ENCODE measurements at regions of chr5 and their contacts with region 1.

Region 1: GRCh38 chr5:154405078-154405792 is 40.6 kb upstream of the SAP30L start:
- DNase-seq: peak; percentile 31 to 75 (median 61)
- ATAC-seq: peak; percentile 96
- H3K4me3 ChIP-seq: peak overlapping the region; percentile 33
- H3K4me3 Mint-ChIP-seq: peak overlapping the region; percentile 35 to 80 (median 65)
- H3K27ac ChIP-seq: no peak overlapping the region
- H3K27ac Mint-ChIP-seq: peak overlapping the region in 3 of 9 donors; percentile 18 to 73 (median 32)
- H3K4me1 ChIP-seq: peaks cover 4 to 8% of the 10 kb centered on the region in 2 donors
- H3K4me1 Mint-ChIP-seq: peaks cover 0 to 15% (median 10%) of the 10 kb centered on the region in 7 donors
- H3K27me3 ChIP-seq: no peaks in the 10 kb centered on the region
- H3K27me3 Mint-ChIP-seq: no peaks in the 10 kb centered on the region

Region 2: DNA sequence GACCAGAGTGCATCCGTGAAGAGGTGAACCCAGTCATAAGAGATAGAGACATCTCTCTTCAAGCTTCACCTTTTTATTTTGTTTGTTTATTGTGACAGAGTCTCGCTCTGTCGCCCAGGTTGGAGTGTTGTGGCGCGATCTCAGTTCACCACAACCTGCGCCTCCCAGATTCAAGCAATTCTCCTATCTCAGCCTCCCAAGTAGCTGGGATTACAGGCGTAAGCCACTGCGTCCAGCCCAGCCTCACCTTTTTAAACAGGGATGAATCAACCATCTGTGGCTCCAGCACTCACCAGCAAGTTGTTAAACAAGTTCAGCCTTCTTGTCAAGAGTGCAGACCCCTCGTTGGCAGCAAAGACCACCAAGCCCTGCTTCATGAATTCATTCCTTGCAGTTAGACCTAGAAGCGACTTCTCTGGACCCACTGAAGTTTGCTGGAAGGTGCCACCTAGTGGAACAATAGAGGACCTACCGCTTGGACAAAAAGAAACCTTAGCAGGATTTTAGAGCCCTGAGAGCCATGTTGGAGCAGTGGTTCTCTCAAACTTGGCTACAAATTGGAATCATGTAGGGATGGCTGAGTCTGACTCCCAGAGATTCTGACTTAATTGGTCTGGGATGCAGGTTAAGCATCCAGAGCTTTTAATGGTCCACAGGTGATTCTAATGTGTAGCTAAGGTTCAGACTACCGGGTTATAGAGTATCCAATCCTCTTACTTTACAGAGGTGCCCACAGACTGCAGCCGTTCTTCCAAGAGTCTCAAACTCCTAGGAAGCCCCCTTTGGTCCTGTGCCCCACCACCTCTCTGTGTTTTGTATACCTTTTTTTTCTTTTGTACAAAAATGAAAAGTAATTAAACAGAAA is 225.2 kb before region 1 on chr5:
- CTCF ChIA-PET with region 1: interaction called, 3 read pairs
- POLR2A ChIA-PET with region 1: no interaction called
- intact Hi-C with region 1: loop called (anchors 1 kb)
- DNase-seq: peak in 6 of 9 donors; percentile 28 to 61 (median 43)
- ATAC-seq: peak; percentile 92
- H3K4me3 ChIP-seq: no peak overlapping the region
- H3K4me3 Mint-ChIP-seq: no peak overlapping the region
- H3K27ac ChIP-seq: no peak overlapping the region
- H3K27ac Mint-ChIP-seq: no peak overlapping the region
- H3K4me1 ChIP-seq: peaks cover 0 to 5% of the 10 kb centered on the region in 2 donors
- H3K4me1 Mint-ChIP-seq: peaks cover 0 to 31% (median 0%) of the 10 kb centered on the region in 7 donors
- H3K27me3 ChIP-seq: no peaks in the 10 kb centered on the region
- H3K27me3 Mint-ChIP-seq: peaks cover 0 to 22% (median 11%) of the 10 kb centered on the region in 5 donors

Region 3: GRCh38 chr5:154238776-154239481 is 166.3 kb before region 1 on chr5:
- CTCF ChIA-PET with region 1: no interaction called
- POLR2A ChIA-PET with region 1: no interaction called
- intact Hi-C with region 1: no loop called
- DNase-seq: no peak
- ATAC-seq: peak; percentile 20
- H3K4me3 ChIP-seq: no peak overlapping the region
- H3K4me3 Mint-ChIP-seq: no peak overlapping the region
- H3K27ac ChIP-seq: no peak overlapping the region
- H3K27ac Mint-ChIP-seq: peak overlapping the region in 1 of 9 donors; percentile 28
- H3K4me1 ChIP-seq: no peaks in the 10 kb centered on the region
- H3K4me1 Mint-ChIP-seq: peaks cover 14 to 58% (median 33%) of the 10 kb centered on the region in 7 donors
- H3K27me3 ChIP-seq: no peaks in the 10 kb centered on the region
- H3K27me3 Mint-ChIP-seq: no peaks in the 10 kb centered on the region

Region 4: DNA sequence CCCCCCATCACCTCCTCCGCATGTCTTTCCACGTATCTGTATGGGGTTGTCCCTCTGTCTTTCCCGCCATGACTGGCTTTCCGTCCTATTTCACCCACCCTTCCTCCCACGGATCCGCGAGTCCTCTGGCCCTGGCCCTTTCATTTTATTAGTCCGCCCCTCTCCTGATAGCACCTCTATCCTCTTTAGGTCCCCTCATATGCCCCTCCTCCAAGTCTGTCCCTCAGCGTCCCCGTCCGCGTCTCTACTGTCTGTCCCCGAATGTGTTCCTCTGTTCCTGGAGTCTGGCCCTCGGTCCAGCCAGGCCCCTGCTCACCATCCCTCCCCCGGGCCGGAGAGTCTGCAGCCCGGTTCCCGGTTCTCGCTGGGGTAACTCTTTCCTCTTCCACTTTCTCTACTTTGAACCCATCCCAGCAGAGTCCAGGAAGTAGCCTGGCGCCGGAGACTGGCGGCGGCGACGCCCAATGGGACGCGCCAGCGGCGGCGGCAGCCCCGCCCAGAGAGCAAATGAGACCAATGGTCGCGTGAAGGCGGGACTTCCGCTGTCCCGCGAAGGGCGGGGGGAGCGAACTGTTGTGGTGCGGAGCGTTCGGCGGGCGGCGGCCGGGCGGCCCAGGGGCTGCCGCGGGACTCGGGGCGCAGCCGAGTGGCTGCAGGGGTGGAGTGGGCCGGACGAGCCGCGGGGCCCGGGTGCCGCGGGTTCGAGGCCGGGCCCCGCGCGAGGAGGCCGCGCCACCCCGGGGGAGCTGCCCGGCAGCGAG is 40.4 kb after region 1 on chr5 and contains the start of gene SAP30L:
- CTCF ChIA-PET with region 1: no interaction called
- POLR2A ChIA-PET with region 1: no interaction called
- intact Hi-C with region 1: loop called in 1 of 2 experiments (anchors 5 kb)
- DNase-seq: peak; percentile 92 to 99 (median 97)
- ATAC-seq: peak; percentile 97
- H3K4me3 ChIP-seq: peak within 1 kb of the TSS; percentile 90
- H3K4me3 Mint-ChIP-seq: peak within 1 kb of the TSS; percentile 94 to 100 (median 99)
- H3K27ac ChIP-seq: peak within 1 kb of the TSS; percentile 83
- H3K27ac Mint-ChIP-seq: peak within 1 kb of the TSS; percentile 88 to 98 (median 95)
- H3K4me1 ChIP-seq: peaks cover 16 to 35% of the 10 kb centered on the region in 2 donors
- H3K4me1 Mint-ChIP-seq: peaks cover 32 to 74% (median 61%) of the 10 kb centered on the region in 7 donors
- H3K27me3 ChIP-seq: no peaks in the 10 kb centered on the region
- H3K27me3 Mint-ChIP-seq: no peaks in the 10 kb centered on the region
- total RNA-seq, gene SAP30L: 31.1 to 45.7 (median 35.9) TPM